PC-9 (cell line): ENCODE measurements at regions of chr1 and their contacts with region 1.

Region 1: DNA sequence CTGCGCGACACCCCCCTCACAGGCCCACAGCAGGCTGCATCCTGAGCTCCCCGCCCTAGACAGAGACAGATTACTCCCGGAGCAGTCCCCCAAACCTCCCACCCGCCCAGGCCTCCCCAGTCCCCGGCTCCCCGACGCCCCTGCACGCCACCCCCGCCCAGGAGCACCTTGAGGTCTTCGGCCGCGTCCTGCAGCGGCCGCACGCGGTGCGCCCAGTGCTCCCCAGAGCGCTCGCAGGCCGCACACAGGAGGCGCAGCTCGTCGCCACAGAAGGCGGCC is 709 bp downstream of the TRIM11 start:
- DNase-seq: no peak
- H3K4me3 ChIP-seq: peak overlapping the region; percentile 95
- H3K27ac ChIP-seq: peak overlapping the region; percentile 77
- H3K4me1 ChIP-seq: peaks cover 45% of the 10 kb centered on the region
- H3K27me3 ChIP-seq: no peaks in the 10 kb centered on the region
- CTCF ChIP-seq: no peak

Region 2: GRCh38 chr1:228180959-228181644 is 224.8 kb before region 1 on chr1:
- CTCF ChIA-PET with region 1: no interaction called
- POLR2A ChIA-PET with region 1: interaction called, 13 read pairs
- intact Hi-C with region 1: no loop called
- DNase-seq: no peak
- H3K4me3 ChIP-seq: no peak overlapping the region
- H3K27ac ChIP-seq: no peak overlapping the region
- H3K4me1 ChIP-seq: no peaks in the 10 kb centered on the region
- H3K27me3 ChIP-seq: no peaks in the 10 kb centered on the region
- CTCF ChIP-seq: no peak

Region 3: GRCh38 chr1:228416217-228416933 is 10.4 kb after region 1 on chr1 and contains the start of gene TRIM17:
- CTCF ChIA-PET with region 1: no interaction called
- POLR2A ChIA-PET with region 1: interaction called, 26 read pairs
- intact Hi-C with region 1: loop called (anchors 1 kb)
- DNase-seq: peak in 1 of 2 experiments; percentile 79
- H3K4me3 ChIP-seq: peak within 1 kb of the TSS; percentile 64
- H3K27ac ChIP-seq: peak within 1 kb of the TSS; percentile 93
- H3K4me1 ChIP-seq: peaks cover 67% of the 10 kb centered on the region
- H3K27me3 ChIP-seq: no peaks in the 10 kb centered on the region
- CTCF ChIP-seq: peak; percentile 63
- total RNA-seq, gene TRIM17: 47.4 and 55.5 TPM in 2 replicates

Region 4: DNA sequence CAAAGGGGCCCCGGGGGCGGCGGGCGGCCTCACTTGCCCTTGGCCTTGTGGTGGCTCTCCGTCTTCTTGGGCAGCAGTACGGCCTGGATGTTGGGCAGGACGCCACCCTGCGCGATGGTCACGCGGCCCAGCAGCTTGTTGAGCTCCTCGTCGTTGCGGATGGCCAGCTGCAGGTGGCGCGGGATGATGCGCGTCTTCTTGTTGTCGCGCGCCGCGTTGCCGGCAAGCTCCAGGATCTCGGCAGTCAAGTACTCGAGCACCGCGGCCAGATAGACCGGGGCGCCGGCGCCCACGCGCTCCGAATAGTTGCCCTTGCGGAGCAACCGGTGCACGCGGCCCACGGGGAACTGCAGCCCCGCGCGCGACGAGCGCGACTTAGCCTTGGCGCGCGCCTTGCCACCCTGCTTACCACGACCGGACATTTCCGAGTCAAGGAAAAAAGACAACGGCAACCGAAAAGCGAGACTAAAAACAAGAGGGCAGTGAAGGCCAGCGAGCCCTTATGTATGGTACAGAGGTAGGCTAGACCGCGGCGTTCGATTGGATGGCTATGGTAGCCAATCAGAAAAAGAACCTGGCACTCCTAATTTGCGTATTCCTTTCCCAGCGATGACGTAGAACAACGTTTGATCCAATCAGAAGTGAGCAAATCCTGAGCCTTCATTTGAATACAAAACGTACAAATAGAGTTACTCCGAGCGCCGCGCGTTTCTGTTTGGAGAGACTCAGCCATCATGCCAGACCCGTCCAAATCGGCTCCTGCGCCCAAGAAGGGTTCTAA is 51.7 kb after region 1 on chr1:
- CTCF ChIA-PET with region 1: no interaction called
- POLR2A ChIA-PET with region 1: interaction called, 18 read pairs
- intact Hi-C with region 1: loop called (anchors 1 kb)
- DNase-seq: peak; percentile 68 to 78
- H3K4me3 ChIP-seq: peak overlapping the region; percentile 55
- H3K27ac ChIP-seq: peak overlapping the region; percentile 49
- H3K4me1 ChIP-seq: peaks cover 20% of the 10 kb centered on the region
- H3K27me3 ChIP-seq: no peaks in the 10 kb centered on the region
- CTCF ChIP-seq: 0 out of 2 replicates have a peak, but pooled peaks have one; percentile 21

Region 5: DNA sequence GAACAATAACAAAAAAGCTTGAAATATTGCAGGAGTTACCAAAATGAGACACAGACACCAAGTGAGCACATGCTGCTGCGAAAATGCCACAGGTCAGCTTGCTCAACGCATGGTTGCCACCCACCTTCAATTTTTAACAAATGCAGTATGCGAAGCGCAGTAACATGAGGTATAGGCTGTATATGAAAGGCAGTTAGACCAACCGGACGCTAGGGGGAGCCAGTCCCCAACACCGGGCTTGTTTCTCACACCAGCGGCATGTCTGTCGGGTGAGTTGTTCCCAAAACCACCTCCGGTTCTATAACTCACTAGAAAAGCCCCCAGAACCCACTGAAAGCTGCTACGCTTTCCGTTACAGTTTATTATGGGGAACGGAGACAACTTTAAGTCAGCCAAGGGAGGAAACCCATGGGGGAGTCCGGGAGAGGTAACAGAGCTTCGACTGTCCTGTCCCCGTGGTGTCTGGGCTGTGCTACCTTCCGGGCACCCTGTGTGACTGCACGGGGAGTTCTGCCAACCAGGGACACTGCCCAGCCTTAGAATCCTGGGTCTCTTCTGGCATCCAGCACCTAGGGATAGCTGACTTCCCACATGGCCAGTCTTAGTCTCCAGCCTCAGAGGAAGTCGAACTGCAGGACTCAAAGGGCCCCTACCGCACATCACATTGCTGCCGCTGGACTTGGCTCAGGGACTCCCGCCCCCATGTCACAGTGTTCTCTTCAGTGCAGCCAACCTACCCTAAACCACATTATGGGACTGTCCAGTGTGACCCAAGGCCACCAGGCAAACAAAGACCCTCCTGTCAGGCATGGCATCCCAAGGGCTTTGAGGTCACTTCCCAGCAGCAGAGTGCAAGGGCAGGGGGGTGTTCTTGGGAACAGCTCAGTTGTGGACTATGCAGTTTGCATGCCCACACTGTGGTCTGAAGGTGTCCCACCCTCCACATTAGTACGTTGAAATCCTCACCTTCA is 95.3 kb after region 1 on chr1:
- CTCF ChIA-PET with region 1: no interaction called
- POLR2A ChIA-PET with region 1: interaction called, 7 read pairs
- intact Hi-C with region 1: loop called (anchors 5 kb)
- DNase-seq: peak; percentile 46 to 82
- H3K4me3 ChIP-seq: no peak overlapping the region
- H3K27ac ChIP-seq: no peak overlapping the region
- H3K4me1 ChIP-seq: no peaks in the 10 kb centered on the region
- H3K27me3 ChIP-seq: no peaks in the 10 kb centered on the region
- CTCF ChIP-seq: peak; percentile 94

Region 6: DNA sequence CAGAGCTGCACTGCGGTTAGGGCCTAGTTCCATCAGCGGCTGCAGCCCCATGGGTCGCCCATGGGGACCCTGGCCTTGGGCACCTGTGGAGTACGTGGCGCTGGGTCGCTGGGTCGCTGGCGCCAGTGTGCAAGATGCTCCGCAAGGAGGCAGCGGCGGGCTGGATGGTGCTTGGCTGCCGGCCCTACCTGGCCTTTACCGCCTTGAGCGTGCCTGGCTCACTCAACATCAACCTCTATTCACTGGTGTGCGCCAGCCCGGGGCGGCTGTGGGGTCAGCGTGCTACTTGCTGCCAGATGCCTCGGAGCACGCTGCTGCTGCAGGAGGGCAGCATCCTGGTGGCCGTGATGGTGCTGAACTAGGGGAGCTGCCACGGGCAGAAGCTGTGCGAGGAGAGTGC is 244.2 kb after region 1 on chr1:
- CTCF ChIA-PET with region 1: no interaction called
- POLR2A ChIA-PET with region 1: no interaction called
- intact Hi-C with region 1: no loop called
- DNase-seq: no peak
- H3K4me3 ChIP-seq: no peak overlapping the region
- H3K27ac ChIP-seq: no peak overlapping the region
- H3K4me1 ChIP-seq: no peaks in the 10 kb centered on the region
- H3K27me3 ChIP-seq: peaks cover 9% of the 10 kb centered on the region
- CTCF ChIP-seq: no peak